WTC11 (cell line): ENCODE measurements at regions of chr22 and their contacts with region 1.

Region 1: GRCh38 chr22:24525416-24526037 is 29.4 kb downstream of the GUCD1 start:
- DNase-seq: peak; percentile 84
- ATAC-seq: peak; percentile 80
- H3K4me3 Mint-ChIP-seq: no peak overlapping the region
- H3K27ac Mint-ChIP-seq: no peak overlapping the region
- H3K4me1 Mint-ChIP-seq: peaks cover 12% of the 10 kb centered on the region
- H3K27me3 Mint-ChIP-seq: no peaks in the 10 kb centered on the region; the same call in 1 of the 2 replicates
- CTCF ChIP-seq: peak; percentile 67; the same call in 1 of the 2 replicates

Region 2: GRCh38 chr22:24165673-24166072 is 359.9 kb before region 1 on chr22:
- CTCF ChIA-PET with region 1: no interaction called
- POLR2A ChIA-PET with region 1: no interaction called
- DNase-seq: no peak
- ATAC-seq: no peak
- H3K4me3 Mint-ChIP-seq: no peak overlapping the region
- H3K27ac Mint-ChIP-seq: no peak overlapping the region
- H3K4me1 Mint-ChIP-seq: no peaks in the 10 kb centered on the region
- H3K27me3 Mint-ChIP-seq: no peaks in the 10 kb centered on the region
- CTCF ChIP-seq: no peak

Region 3: DNA sequence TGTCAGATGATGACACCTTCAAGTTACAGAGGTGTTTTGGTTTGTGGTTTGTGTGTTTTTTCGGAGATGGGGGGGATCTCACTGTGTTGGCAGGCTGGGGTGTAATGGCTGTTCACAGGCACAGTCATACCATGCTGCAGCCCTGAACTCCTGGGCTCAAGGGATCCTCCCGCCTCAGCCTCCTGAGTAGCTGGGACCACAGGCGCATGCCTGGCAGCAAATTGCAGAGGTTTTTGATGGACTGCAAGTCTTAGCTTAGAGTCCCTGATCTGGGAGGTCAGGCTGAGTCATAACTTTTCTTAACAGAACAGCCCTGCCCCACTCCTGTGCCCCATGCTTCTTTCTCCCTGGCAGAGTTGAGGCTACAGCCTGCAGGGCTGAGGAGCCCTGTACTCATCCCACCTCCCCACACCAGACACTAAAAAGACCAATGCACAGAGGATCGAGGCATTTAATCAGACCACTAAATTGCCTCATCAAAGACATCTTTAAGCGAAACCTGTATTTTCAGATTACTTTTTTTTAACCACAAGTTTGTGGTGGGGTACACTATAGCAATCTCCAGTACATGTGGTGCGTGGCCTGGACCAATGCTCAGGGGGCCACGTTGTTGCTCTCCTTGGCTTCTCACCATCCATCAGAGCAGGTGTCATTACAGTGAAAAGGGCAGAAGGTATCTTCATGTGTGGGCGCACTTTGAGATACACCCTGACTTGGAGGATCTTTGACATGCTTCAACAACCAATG is 115.2 kb before region 1 on chr22:
- CTCF ChIA-PET with region 1: interaction called, 10 read pairs
- POLR2A ChIA-PET with region 1: no interaction called
- DNase-seq: no peak
- ATAC-seq: no peak
- H3K4me3 Mint-ChIP-seq: no peak overlapping the region
- H3K27ac Mint-ChIP-seq: peak overlapping the region; percentile 77; the same call in 1 of the 2 replicates
- H3K4me1 Mint-ChIP-seq: peaks cover 25% of the 10 kb centered on the region
- H3K27me3 Mint-ChIP-seq: no peaks in the 10 kb centered on the region
- CTCF ChIP-seq: no peak

Region 4: DNA sequence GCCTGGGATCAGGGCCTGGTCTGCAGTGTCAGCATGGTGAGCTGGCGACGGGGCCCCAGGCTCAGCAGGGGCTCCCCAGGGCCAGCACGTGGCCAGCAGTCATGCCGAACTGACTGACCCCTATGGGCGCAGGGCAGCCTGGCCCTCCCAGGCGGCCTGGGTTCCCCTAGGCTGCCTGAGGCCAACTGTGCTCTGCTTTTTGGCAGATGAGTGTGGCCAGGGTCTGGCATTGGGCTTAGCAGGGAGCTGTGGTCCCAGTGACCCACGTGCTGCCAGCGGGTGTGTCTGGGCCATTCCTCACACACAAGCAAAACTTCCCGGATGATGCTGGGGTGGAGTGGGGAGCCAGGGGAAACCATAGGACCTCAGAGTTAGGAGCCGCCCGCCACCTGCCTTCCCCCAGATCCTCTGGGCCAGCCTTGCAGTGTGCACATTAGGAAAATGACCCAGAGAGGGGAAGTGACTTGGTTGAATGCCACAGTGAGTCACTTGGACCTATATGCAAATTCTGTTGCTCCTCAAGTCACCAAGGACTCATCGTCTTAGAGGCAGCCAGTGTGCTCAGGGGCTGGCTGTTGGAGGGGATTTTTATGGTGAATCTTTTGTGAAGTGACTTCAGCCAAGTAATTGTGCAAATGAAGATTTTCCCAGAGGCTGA is 91.6 kb before region 1 on chr22:
- CTCF ChIA-PET with region 1: interaction called, 11 read pairs
- POLR2A ChIA-PET with region 1: no interaction called
- DNase-seq: no peak
- ATAC-seq: no peak
- H3K4me3 Mint-ChIP-seq: no peak overlapping the region
- H3K27ac Mint-ChIP-seq: no peak overlapping the region
- H3K4me1 Mint-ChIP-seq: peaks cover 6% of the 10 kb centered on the region
- H3K27me3 Mint-ChIP-seq: no peaks in the 10 kb centered on the region
- CTCF ChIP-seq: no peak

Region 5: DNA sequence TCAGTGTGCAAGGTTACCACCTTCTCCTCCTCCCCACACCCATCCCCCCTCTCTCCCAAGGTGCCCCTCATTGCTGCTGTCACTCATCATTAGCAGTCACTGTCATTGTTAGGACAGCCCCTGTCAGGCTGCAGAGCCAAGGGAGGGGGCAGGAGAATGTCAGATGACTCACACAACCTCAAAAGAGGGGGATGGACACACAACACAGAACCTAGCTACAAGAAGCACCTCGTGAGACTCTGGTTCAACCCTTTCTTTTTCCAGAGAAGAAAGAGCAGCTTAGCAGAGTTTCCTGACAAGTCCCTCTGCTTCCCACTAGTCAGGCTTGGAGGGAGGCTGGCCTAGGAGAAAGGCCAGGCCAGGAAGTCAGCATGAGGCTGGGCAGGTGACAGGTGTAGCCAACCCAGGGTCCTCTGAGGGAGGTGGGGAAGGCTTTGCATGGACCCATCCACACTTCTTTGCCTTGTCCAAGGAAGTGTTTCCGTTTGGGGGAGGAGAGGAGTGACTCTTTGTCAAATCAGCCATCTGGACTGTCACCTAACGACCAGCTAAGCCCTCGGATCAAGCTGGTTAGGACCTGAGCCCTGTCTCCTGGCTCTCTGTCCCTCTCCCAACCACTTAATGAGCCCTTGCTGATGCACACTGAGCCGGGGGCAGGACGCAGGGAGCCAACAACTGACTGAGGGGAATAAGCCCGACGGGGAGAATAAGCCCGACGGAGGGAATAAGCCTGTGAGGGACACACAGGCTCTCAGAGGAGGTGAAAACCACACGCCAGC is 79.9 kb before region 1 on chr22:
- CTCF ChIA-PET with region 1: interaction called, 10 read pairs
- POLR2A ChIA-PET with region 1: no interaction called
- DNase-seq: no peak
- ATAC-seq: peak; percentile 25; the same call in 1 of the 2 replicates
- H3K4me3 Mint-ChIP-seq: no peak overlapping the region
- H3K27ac Mint-ChIP-seq: no peak overlapping the region
- H3K4me1 Mint-ChIP-seq: peaks cover 12% of the 10 kb centered on the region
- H3K27me3 Mint-ChIP-seq: no peaks in the 10 kb centered on the region
- CTCF ChIP-seq: no peak

Region 6: GRCh38 chr22:24503137-24503842 is 22.2 kb before region 1 on chr22:
- CTCF ChIA-PET with region 1: interaction called, 58 read pairs
- POLR2A ChIA-PET with region 1: interaction called, 3 read pairs
- DNase-seq: peak; percentile 78
- ATAC-seq: peak; percentile 65
- H3K4me3 Mint-ChIP-seq: no peak overlapping the region
- H3K27ac Mint-ChIP-seq: no peak overlapping the region
- H3K4me1 Mint-ChIP-seq: peaks cover 26% of the 10 kb centered on the region
- H3K27me3 Mint-ChIP-seq: no peaks in the 10 kb centered on the region; the same call in none of the 2 replicates
- CTCF ChIP-seq: peak; percentile 48; the same call in 1 of the 2 replicates